Activated T-helper 1 cell treated with anti-CD3 and anti-CD28 coated beads, Interleukin-12 subunit alpha, Interleukin-12 subunit beta, Interleukin-2, Interleukin-4 antibody, amounts not matched to agents 30 ng/mL and 10 ng/mL and 1 ng/mL, durations not matched to agents 14 hours and 24 hours and 36 hours (primary cell): ENCODE measurements at regions of chr11 and their contacts with region 1.

Region 1: GRCh38 chr11:128039140-128040021 is 548.0 kb downstream of the ETS1 start:
- DNase-seq: peak; percentile 77
- H3K4me3 Mint-ChIP-seq: peak overlapping the region; percentile 68
- H3K27ac Mint-ChIP-seq: peak overlapping the region; percentile 92
- H3K4me1 Mint-ChIP-seq: peaks cover 34% of the 10 kb centered on the region
- H3K27me3 Mint-ChIP-seq: no peaks in the 10 kb centered on the region

Region 2: DNA sequence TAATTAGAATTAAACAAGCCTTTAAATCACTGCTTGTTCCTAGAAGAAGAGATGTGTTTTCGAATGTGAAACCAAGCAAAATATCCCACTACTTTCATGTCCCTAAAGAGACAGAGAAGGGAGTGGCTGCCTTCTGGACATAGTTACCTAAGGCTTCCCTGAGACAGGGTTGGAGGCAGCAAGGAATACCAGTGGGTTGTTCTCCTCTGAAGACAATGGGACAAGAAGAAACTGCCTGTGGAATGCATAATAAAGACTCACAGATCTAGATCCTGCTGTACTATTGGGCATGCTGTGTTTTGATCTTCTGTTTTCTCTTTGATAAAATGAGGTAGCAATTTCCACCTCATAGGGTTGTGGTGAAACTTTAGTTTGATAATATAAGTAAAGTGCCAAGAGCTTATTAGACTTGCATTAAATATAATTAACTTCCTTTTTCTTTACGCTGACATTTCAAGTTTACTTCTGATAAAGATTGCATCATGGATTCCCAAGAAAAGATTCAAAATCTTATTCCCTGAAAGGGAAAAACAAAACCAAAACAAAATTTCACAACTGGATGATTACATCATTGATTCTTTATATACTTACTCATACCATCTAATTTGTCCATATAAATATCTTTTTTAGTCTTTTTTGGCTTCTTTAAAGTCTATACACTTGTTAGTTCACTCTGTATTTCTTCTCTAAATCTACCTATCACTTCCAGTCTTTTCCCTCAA is 73.3 kb before region 1 on chr11:
- intact Hi-C with region 1: no loop called
- DNase-seq: no peak
- H3K4me3 Mint-ChIP-seq: no peak overlapping the region
- H3K27ac Mint-ChIP-seq: no peak overlapping the region
- H3K4me1 Mint-ChIP-seq: no peaks in the 10 kb centered on the region
- H3K27me3 Mint-ChIP-seq: peaks cover 13% of the 10 kb centered on the region

Region 3: DNA sequence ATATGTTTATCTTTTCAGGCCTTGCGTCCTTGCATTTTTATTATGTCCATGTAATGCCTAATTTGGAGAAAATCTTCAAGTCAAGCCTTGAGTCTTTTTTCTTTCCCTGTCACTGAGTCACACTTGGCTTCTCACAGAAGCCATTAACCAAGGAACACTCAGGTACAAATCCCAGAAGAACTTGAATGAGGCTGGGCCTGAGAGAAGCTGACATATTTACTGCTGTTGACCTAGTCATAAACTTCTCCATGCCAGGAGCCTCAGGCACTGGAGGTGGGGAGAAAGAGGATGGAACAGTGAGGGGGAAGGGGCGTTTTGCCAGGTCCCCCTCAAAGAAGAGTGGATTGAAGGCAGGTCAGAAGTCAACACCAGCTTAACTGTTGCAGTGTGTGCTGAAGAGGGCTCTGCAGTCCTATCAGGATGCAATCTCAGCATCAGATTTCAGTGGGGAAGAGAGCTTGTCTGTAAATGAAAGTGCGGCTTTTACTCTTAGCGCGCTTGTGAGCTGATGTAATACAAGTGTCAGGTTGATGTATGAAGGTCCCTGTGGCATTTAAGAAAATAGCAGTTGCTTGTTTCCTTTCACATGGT is 22.0 kb after region 1 on chr11:
- intact Hi-C with region 1: no loop called
- DNase-seq: no peak
- H3K4me3 Mint-ChIP-seq: no peak overlapping the region
- H3K27ac Mint-ChIP-seq: no peak overlapping the region
- H3K4me1 Mint-ChIP-seq: peaks cover under 1% of the 10 kb centered on the region
- H3K27me3 Mint-ChIP-seq: peaks cover 2% of the 10 kb centered on the region

Region 4: GRCh38 chr11:128103278-128103873 is 64.0 kb after region 1 on chr11:
- intact Hi-C with region 1: loop called (anchors 1 kb)
- DNase-seq: no peak
- H3K4me3 Mint-ChIP-seq: no peak overlapping the region
- H3K27ac Mint-ChIP-seq: no peak overlapping the region
- H3K4me1 Mint-ChIP-seq: peaks cover 4% of the 10 kb centered on the region
- H3K27me3 Mint-ChIP-seq: peaks cover 5% of the 10 kb centered on the region

Region 5: DNA sequence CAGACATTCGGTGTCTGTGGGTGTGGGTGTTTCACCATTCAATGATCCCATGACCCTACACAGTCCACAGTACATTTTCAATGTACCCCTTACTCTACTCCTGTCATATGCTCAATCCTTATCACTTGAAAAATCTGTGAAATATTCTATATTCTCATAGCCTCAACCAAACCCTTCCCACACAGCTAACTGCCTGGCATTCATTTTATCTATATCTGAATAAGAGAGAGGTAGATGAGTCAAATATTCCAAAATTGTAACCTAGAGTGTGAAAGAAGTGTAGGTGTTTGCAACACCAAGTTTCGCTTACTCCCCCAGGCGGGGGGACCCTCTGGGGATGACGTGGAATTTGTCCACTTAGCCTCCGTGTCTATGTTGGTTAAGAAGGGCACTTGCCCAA is 193.2 kb after region 1 on chr11:
- intact Hi-C with region 1: loop called (anchors 1 kb)
- DNase-seq: no peak
- H3K4me3 Mint-ChIP-seq: peak overlapping the region; percentile 58
- H3K27ac Mint-ChIP-seq: peak overlapping the region; percentile 85
- H3K4me1 Mint-ChIP-seq: peaks cover 58% of the 10 kb centered on the region
- H3K27me3 Mint-ChIP-seq: peaks cover 2% of the 10 kb centered on the region

Region 6: GRCh38 chr11:128522055-128522942 is 482.9 kb after region 1 on chr11:
- intact Hi-C with region 1: loop called (anchors 2 kb)
- DNase-seq: peak; percentile 91
- H3K4me3 Mint-ChIP-seq: peak overlapping the region; percentile 96
- H3K27ac Mint-ChIP-seq: peak overlapping the region; percentile 98
- H3K4me1 Mint-ChIP-seq: peaks cover 65% of the 10 kb centered on the region
- H3K27me3 Mint-ChIP-seq: no peaks in the 10 kb centered on the region

Region 7: DNA sequence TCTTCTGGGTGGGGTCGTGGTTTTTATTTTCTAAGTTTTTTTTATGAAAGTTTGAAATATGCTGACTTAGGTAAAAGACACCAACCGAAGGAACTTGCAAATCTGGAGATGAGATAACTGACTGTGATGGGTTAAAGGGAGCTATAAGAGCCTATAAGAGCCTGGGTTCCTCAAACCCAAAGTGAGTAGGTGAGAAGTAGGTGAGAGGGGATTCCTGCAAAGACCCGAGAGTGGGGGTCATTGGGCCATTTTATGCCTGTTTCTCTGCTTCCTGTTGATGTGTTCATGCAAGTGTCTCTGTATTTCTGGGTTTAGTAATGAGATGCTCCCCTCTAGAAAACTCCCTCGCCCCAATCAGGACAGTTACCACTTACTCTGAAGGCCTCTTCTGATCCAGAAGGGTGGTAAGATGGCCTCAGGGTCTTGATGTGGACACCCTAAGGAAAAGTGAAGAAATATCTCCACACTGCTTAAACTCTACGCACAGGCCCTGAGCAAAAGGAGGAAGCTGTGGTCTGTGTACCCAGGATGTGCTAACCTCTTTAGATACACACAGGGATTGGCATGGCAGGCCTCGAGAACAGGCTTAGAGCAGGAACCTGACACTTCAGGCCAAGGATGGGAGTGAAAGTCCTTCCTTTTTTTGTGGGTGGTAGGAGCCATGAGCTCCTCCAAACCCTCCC is 656.3 kb after region 1 on chr11:
- intact Hi-C with region 1: loop called (anchors 1 kb)
- DNase-seq: peak; percentile 38
- H3K4me3 Mint-ChIP-seq: peak overlapping the region; percentile 87
- H3K27ac Mint-ChIP-seq: peak overlapping the region; percentile 91
- H3K4me1 Mint-ChIP-seq: peaks cover 74% of the 10 kb centered on the region
- H3K27me3 Mint-ChIP-seq: peaks cover 15% of the 10 kb centered on the region

Region 8: GRCh38 chr11:128868841-128869580 is 829.6 kb after region 1 on chr11:
- intact Hi-C with region 1: loop called (anchors 1 kb)
- DNase-seq: no peak
- H3K4me3 Mint-ChIP-seq: no peak overlapping the region
- H3K27ac Mint-ChIP-seq: no peak overlapping the region
- H3K4me1 Mint-ChIP-seq: no peaks in the 10 kb centered on the region
- H3K27me3 Mint-ChIP-seq: peaks cover 13% of the 10 kb centered on the region